H1 (cell line): ENCODE measurements at regions of chr17 and their contacts with region 1.

Region 1: GRCh38 chr17:2244545-2245525 is 58.8 kb downstream of the SMG6 start:
- DNase-seq: peak; percentile 50 to 90
- H3K4me3 ChIP-seq: no peak overlapping the region
- H3K27ac ChIP-seq: no peak overlapping the region
- H3K4me1 ChIP-seq: no peaks in the 10 kb centered on the region
- H3K27me3 ChIP-seq: no peaks in the 10 kb centered on the region
- CTCF ChIP-seq: peak; percentile 97 to 100 (median 99)
- EP300 ChIP-seq: no peak
- POLR2A ChIP-seq: no peak
- RAD21 ChIP-seq: peak; percentile 99

Region 2: GRCh38 chr17:2064980-2065785 is 179.7 kb before region 1 on chr17:
- CTCF ChIA-PET with region 1: interaction called, 121 read pairs
- POLR2A ChIA-PET with region 1: interaction called, 4 read pairs
- DNase-seq: peak in 1 of 2 experiments; percentile 89
- H3K4me3 ChIP-seq: no peak overlapping the region
- H3K27ac ChIP-seq: no peak overlapping the region
- H3K4me1 ChIP-seq: peaks cover 0 to 13% (median 9%) of the 10 kb centered on the region in 4 experiments; a peak in 6 of 7 replicates
- H3K27me3 ChIP-seq: peaks cover 0 to 11% (median 5%) of the 10 kb centered on the region in 4 experiments; a peak in 5 of 7 replicates
- CTCF ChIP-seq: peak; percentile 70 to 91 (median 90)
- EP300 ChIP-seq: no peak
- POLR2A ChIP-seq: no peak
- RAD21 ChIP-seq: peak; percentile 71 to 73

Region 3: GRCh38 chr17:2094891-2095535 is 149.8 kb before region 1 on chr17:
- CTCF ChIA-PET with region 1: interaction called, 23 read pairs
- POLR2A ChIA-PET with region 1: interaction called, 3 read pairs
- DNase-seq: no peak
- H3K4me3 ChIP-seq: no peak overlapping the region
- H3K27ac ChIP-seq: peak overlapping the region; percentile 1; the same call in 1 of the 2 replicates
- H3K4me1 ChIP-seq: peaks cover 2 to 16% (median 7%) of the 10 kb centered on the region in 4 experiments
- H3K27me3 ChIP-seq: no peaks in the 10 kb centered on the region
- CTCF ChIP-seq: peak; percentile 53 to 64 (median 63)
- EP300 ChIP-seq: no peak
- POLR2A ChIP-seq: no peak
- RAD21 ChIP-seq: peak; percentile 74 to 81

Region 4: GRCh38 chr17:2181206-2181896 is 63.5 kb before region 1 on chr17:
- CTCF ChIA-PET with region 1: interaction called, 14 read pairs
- POLR2A ChIA-PET with region 1: no interaction called
- DNase-seq: no peak
- H3K4me3 ChIP-seq: no peak overlapping the region
- H3K27ac ChIP-seq: no peak overlapping the region
- H3K4me1 ChIP-seq: peaks cover 0 to 3% (median 1%) of the 10 kb centered on the region in 4 experiments; a peak in 3 of 7 replicates
- H3K27me3 ChIP-seq: no peaks in the 10 kb centered on the region
- CTCF ChIP-seq: no peak
- EP300 ChIP-seq: no peak
- POLR2A ChIP-seq: no peak
- RAD21 ChIP-seq: no peak

Region 5: GRCh38 chr17:2232244-2232638 is 12.6 kb before region 1 on chr17:
- CTCF ChIA-PET with region 1: interaction called, 12 read pairs
- POLR2A ChIA-PET with region 1: no interaction called
- DNase-seq: no peak
- H3K4me3 ChIP-seq: no peak overlapping the region
- H3K27ac ChIP-seq: no peak overlapping the region
- H3K4me1 ChIP-seq: no peaks in the 10 kb centered on the region
- H3K27me3 ChIP-seq: no peaks in the 10 kb centered on the region
- CTCF ChIP-seq: no peak
- EP300 ChIP-seq: no peak
- POLR2A ChIP-seq: no peak
- RAD21 ChIP-seq: no peak

Region 6: GRCh38 chr17:2323629-2324314 is 78.9 kb after region 1 on chr17:
- CTCF ChIA-PET with region 1: no interaction called
- POLR2A ChIA-PET with region 1: no interaction called
- DNase-seq: no peak
- H3K4me3 ChIP-seq: no peak overlapping the region
- H3K27ac ChIP-seq: no peak overlapping the region
- H3K4me1 ChIP-seq: no peaks in the 10 kb centered on the region
- H3K27me3 ChIP-seq: no peaks in the 10 kb centered on the region
- CTCF ChIP-seq: no peak
- EP300 ChIP-seq: no peak
- POLR2A ChIP-seq: no peak
- RAD21 ChIP-seq: no peak